Naive thymus-derived CD4-positive, alpha-beta T cell (primary cell): ENCODE measurements at regions of chr1 and their contacts with region 1.

Region 1: DNA sequence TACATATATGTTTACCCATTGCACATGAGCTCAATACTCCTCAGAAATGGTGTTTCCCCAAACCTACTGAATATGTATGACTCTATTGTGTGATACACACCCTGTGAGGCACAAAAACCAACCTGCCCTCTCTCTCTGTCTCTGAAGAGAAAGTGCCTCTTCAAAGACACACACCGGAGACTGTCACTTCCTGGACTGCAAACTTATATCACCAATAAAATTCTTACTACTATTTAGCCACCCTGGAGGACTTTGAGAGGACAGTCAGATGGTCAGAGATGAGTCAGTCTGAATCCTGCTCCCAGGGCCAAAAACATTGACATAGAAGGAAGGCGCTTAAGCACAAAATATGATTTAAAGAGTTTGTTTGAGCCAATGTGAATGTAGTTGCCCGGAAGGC is 110.4 kb downstream of the PPIAL4G start:
- DNase-seq: peak in 8 of 9 donors; percentile 36 to 83 (median 68)
- ATAC-seq: peak; percentile 86
- H3K4me3 ChIP-seq: peak overlapping the region; percentile 38
- H3K4me3 Mint-ChIP-seq: peak overlapping the region; percentile 63 to 89 (median 78)
- H3K27ac ChIP-seq: peak overlapping the region; percentile 77
- H3K27ac Mint-ChIP-seq: peak overlapping the region; percentile 89 to 99 (median 97)
- H3K4me1 ChIP-seq: peaks cover 35 to 52% of the 10 kb centered on the region in 2 donors
- H3K4me1 Mint-ChIP-seq: peaks cover 32 to 64% (median 46%) of the 10 kb centered on the region in 7 donors
- H3K27me3 ChIP-seq: no peaks in the 10 kb centered on the region
- H3K27me3 Mint-ChIP-seq: no peaks in the 10 kb centered on the region

Region 2: DNA sequence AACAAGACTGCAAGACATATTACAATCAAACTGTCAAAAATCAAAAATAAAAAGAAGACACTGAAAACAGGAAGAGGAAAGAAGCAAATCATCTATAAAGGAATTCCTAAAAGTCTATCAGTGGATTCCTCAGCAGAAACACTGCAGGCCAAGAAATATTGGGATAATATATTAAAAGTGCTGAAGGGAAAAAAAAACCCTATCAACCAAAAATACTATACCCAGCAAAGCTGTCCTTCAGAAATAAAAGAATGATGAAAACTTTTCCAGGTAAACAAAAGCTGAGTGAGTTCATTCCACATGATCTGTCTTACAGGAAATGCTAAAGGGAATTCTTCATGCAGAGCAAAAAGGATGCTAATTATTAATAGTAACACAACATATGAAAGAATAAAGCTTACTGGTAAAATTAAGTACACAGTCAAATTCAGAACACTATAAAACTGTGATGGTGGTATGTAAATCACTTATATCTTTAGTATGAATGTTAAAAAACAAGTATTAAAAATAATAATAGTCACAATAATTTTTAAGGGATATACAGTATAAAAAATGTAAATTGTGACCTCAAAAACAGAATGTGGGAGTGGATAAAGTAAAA is 689.5 kb before region 1 on chr1:
- CTCF ChIA-PET with region 1: no interaction called
- POLR2A ChIA-PET with region 1: no interaction called
- intact Hi-C with region 1: no loop called
- DNase-seq: no peak
- ATAC-seq: no peak
- H3K4me3 ChIP-seq: no peak overlapping the region
- H3K4me3 Mint-ChIP-seq: no peak overlapping the region
- H3K27ac ChIP-seq: no peak overlapping the region
- H3K27ac Mint-ChIP-seq: no peak overlapping the region
- H3K4me1 ChIP-seq: no peaks in the 10 kb centered on the region
- H3K4me1 Mint-ChIP-seq: no peaks in the 10 kb centered on the region
- H3K27me3 ChIP-seq: no peaks in the 10 kb centered on the region
- H3K27me3 Mint-ChIP-seq: peaks cover 0 to 29% (median 11%) of the 10 kb centered on the region in 5 donors

Region 3: DNA sequence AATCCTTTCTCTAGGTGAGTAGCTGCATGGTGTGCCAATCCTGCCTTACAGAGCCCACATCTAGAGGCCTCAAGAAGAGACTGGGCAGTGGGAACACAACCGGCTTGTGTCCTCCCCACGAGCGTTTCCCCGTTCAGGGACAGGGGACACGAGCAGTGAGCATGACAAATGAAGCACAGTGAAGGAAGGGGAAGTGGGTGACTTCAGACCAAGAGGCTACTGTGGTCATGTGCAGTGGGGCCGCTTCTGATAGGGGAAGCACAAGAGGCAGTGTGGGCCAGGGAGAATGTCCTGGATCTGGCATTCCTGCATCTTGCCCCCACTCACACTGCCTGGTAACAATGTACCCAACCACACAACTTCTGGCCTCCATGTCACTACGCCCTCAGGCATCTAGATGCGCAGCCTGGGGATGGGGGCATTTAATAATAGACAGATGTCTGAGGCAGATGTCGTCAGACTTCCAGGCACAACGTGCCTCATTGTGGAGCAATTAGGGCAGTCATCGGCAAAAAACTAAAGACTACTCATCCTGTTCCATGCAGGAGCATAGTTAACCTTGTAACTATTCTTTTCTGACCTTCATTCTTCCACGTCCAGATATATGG is 65.0 kb before region 1 on chr1:
- CTCF ChIA-PET with region 1: no interaction called
- POLR2A ChIA-PET with region 1: no interaction called
- intact Hi-C with region 1: no loop called
- DNase-seq: no peak
- ATAC-seq: peak; percentile 64
- H3K4me3 ChIP-seq: no peak overlapping the region
- H3K4me3 Mint-ChIP-seq: no peak overlapping the region
- H3K27ac ChIP-seq: no peak overlapping the region
- H3K27ac Mint-ChIP-seq: no peak overlapping the region
- H3K4me1 ChIP-seq: peaks cover 5 to 8% of the 10 kb centered on the region in 2 donors
- H3K4me1 Mint-ChIP-seq: peaks cover 14 to 32% (median 24%) of the 10 kb centered on the region in 7 donors
- H3K27me3 ChIP-seq: peaks cover 0 to 4% of the 10 kb centered on the region in 2 donors
- H3K27me3 Mint-ChIP-seq: peaks cover 45 to 76% (median 61%) of the 10 kb centered on the region in 5 donors

Region 4: DNA sequence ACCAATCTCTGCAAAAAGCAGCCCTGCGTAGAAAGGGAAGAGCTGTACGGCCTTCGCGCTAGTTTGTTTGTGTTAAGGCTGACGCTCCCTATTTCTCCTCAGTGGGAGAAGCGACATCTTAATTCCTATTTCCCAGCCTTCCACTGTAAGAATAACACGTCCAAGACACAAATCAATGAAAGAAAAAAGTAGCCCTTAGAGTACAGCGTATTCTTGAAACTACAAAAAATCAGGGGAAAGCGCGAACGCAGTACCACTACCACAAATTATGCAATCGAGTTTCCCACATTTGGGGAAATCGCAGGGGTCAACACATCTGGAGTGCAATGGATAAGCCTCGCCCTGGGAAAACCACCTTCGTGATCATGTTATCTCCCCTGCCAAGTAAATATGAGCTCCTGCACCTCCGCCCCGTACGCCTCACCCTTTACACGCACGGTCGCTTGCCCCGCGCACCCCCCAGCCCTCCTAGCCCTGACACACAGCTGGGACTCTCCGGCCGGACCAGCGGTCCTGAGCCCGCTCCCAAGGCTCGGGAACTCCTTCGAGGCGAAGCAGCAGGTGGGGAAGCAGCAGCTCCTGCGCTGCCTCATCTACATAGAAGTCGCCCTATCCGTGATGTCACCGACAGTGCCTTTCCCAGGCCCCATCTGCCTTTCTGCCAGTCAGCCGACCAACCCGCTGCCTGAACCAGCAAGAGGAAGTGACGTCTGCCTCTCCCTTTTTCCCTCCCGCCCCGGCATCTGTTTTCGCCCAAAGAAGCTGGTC is 15.7 kb after region 1 on chr1:
- CTCF ChIA-PET with region 1: interaction called, 6 read pairs
- POLR2A ChIA-PET with region 1: interaction called, 143 read pairs
- intact Hi-C with region 1: loop called in 1 of 2 experiments (anchors 1 kb)
- DNase-seq: peak; percentile 67 to 90 (median 85)
- ATAC-seq: peak; percentile 94
- H3K4me3 ChIP-seq: peak overlapping the region; percentile 57
- H3K4me3 Mint-ChIP-seq: peak overlapping the region; percentile 88 to 97 (median 94)
- H3K27ac ChIP-seq: peak overlapping the region; percentile 94
- H3K27ac Mint-ChIP-seq: peak overlapping the region; percentile 98 to 100 (median 99)
- H3K4me1 ChIP-seq: peaks cover 0 to 9% of the 10 kb centered on the region in 2 donors
- H3K4me1 Mint-ChIP-seq: peaks cover 17 to 79% (median 60%) of the 10 kb centered on the region in 7 donors
- H3K27me3 ChIP-seq: no peaks in the 10 kb centered on the region
- H3K27me3 Mint-ChIP-seq: no peaks in the 10 kb centered on the region

Region 5: GRCh38 chr1:148435406-148435805 is 62.7 kb after region 1 on chr1:
- CTCF ChIA-PET with region 1: interaction called, 3 read pairs
- POLR2A ChIA-PET with region 1: interaction called, 4 read pairs
- intact Hi-C with region 1: loop called in 1 of 2 experiments (anchors 1 kb)
- DNase-seq: no peak
- ATAC-seq: no peak
- H3K4me3 ChIP-seq: no peak overlapping the region
- H3K4me3 Mint-ChIP-seq: no peak overlapping the region
- H3K27ac ChIP-seq: no peak overlapping the region
- H3K27ac Mint-ChIP-seq: peak overlapping the region in 8 of 9 donors; percentile 2 to 79 (median 46)
- H3K4me1 ChIP-seq: peaks cover 0 to 5% of the 10 kb centered on the region in 2 donors
- H3K4me1 Mint-ChIP-seq: peaks cover 24 to 81% (median 78%) of the 10 kb centered on the region in 7 donors
- H3K27me3 ChIP-seq: no peaks in the 10 kb centered on the region
- H3K27me3 Mint-ChIP-seq: no peaks in the 10 kb centered on the region